ENCODE measurements at regions of chr11 and their contacts with region 1.

Region 1: GRCh38 chr11:48034926-48035871 is 54.8 kb downstream of the PTPRJ start:
- DNase-seq: no peak
- H3K4me3 Mint-ChIP-seq: peak overlapping the region; percentile 52
- H3K27ac Mint-ChIP-seq: peak overlapping the region; percentile 69
- H3K4me1 Mint-ChIP-seq: peaks cover 67% of the 10 kb centered on the region
- H3K27me3 Mint-ChIP-seq: no peaks in the 10 kb centered on the region

Region 2: DNA sequence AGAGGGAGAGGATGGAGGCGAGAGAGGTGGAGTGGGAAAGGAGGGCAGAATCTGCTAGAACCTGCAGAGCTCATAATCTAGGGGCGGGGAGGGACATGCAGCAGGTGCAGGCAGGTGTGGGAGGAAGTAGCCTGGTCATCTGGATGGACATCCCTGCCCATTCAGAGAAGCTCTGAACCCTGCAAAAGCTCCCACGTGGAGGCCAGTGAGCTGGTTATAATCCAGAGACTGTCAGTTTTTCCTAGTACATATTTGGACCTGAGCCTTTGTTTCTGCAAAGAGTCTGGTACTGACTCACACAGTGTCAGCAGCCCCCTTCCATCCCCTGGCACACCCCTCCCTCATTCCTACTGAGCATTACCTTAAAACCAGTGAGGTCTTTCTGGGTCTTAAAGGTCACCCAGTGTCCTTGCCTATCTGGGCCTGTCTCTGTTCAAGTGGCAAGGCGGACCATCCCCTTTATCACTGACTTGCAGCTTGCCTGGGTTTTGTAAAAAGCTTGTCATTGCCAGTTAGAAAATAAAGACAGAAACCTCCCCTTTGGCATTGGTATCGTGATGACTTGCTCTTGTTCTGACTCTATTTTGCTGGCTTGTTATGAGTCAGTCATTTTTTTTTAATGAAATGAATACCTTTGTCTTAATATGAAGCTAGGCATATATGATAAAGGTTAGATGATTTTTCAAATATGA is 28.8 kb before region 1 on chr11:
- intact Hi-C with region 1: no loop called
- DNase-seq: peak; percentile 83
- H3K4me3 Mint-ChIP-seq: peak overlapping the region; percentile 67
- H3K27ac Mint-ChIP-seq: peak overlapping the region; percentile 97
- H3K4me1 Mint-ChIP-seq: peaks cover 64% of the 10 kb centered on the region
- H3K27me3 Mint-ChIP-seq: no peaks in the 10 kb centered on the region

Region 3: GRCh38 chr11:48020092-48020755 is 15.0 kb before region 1 on chr11:
- intact Hi-C with region 1: loop called (anchors 2 kb)
- DNase-seq: no peak
- H3K4me3 Mint-ChIP-seq: peak overlapping the region; percentile 49
- H3K27ac Mint-ChIP-seq: peak overlapping the region; percentile 87
- H3K4me1 Mint-ChIP-seq: peaks cover 73% of the 10 kb centered on the region
- H3K27me3 Mint-ChIP-seq: no peaks in the 10 kb centered on the region

Region 4: DNA sequence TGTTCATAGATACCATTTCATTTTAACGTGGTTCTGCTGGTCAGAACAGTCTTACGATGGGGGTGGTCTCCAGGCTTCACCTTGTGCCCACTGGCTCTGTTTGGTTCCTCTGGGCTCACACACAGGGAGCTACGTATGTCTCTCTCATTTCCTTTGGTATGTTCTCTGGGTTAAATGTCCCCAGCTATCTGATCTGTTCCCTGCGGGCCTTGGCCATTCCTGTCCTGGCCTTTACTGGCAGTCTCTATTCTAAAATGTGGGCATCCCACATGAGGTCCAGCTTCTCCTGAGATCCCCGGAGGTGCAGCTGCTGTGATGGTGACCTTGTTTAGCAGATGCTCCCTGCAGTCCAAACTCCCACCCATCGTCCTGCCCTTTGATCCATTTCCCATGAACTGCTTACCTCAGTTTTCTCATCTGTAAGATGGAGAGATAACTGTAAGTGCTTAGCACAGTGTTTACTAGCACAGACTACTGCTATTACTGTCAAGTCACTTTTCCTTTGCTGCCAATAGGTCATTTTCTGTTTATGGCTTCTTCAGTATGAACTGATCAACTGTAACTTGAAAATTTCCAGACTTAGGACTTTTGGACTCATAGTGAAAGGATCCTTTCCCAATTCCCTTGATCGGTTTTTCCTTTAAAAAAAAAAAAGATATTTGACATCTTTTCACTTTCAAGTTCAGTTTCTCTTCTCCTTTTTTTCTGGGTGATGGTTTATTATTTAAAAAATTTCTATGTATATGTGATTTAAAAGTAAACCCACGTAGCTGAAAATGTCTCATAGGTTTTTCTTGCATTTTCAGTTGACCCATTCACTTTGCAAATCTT is 38.0 kb after region 1 on chr11:
- intact Hi-C with region 1: no loop called
- DNase-seq: no peak
- H3K4me3 Mint-ChIP-seq: peak overlapping the region; percentile 40
- H3K27ac Mint-ChIP-seq: peak overlapping the region; percentile 92
- H3K4me1 Mint-ChIP-seq: peaks cover 31% of the 10 kb centered on the region
- H3K27me3 Mint-ChIP-seq: no peaks in the 10 kb centered on the region